ENCODE measurements at regions of chr12 and their contacts with region 1.

Region 1: GRCh38 chr12:56152318-56153033 is at the start of gene MYL6B:
- DNase-seq: peak; percentile 90 to 96
- ATAC-seq: peak; percentile 93 to 98 (median 97)
- H3K4me3 ChIP-seq: peak within 1 kb of the TSS; percentile 68
- H3K4me3 Mint-ChIP-seq: peak within 1 kb of the TSS; percentile 84
- H3K27ac ChIP-seq: peak within 1 kb of the TSS; percentile 90
- H3K27ac Mint-ChIP-seq: peak within 1 kb of the TSS; percentile 94 to 99
- H3K4me1 ChIP-seq: peaks cover 25% of the 10 kb centered on the region
- H3K4me1 Mint-ChIP-seq: peaks cover 14 to 35% of the 10 kb centered on the region in 2 donors
- H3K27me3 ChIP-seq: no peaks in the 10 kb centered on the region
- H3K27me3 Mint-ChIP-seq: no peaks in the 10 kb centered on the region
- CTCF ChIP-seq: no peak
- total RNA-seq, gene MYL6B: 6.7 to 8.9 (median 7.4) TPM

Region 2: GRCh38 chr12:56127888-56128669 is 24.4 kb before region 1 on chr12 and contains the start of gene ESYT1:
- intact Hi-C with region 1: loop called (anchors 1 kb)
- DNase-seq: peak; percentile 91 to 100
- ATAC-seq: peak; percentile 87 to 96 (median 90)
- H3K4me3 ChIP-seq: peak within 1 kb of the TSS; percentile 90
- H3K4me3 Mint-ChIP-seq: peak within 1 kb of the TSS; percentile 97
- H3K27ac ChIP-seq: peak within 1 kb of the TSS; percentile 85
- H3K27ac Mint-ChIP-seq: peak within 1 kb of the TSS; percentile 88 to 93
- H3K4me1 ChIP-seq: peaks cover 45% of the 10 kb centered on the region
- H3K4me1 Mint-ChIP-seq: peaks cover 52 to 68% of the 10 kb centered on the region in 2 donors
- H3K27me3 ChIP-seq: no peaks in the 10 kb centered on the region
- H3K27me3 Mint-ChIP-seq: no peaks in the 10 kb centered on the region
- CTCF ChIP-seq: no peak
- total RNA-seq, gene ESYT1: 198 to 215 (median 199) TPM

Measured in natural killer cell (primary cell).